Activated CD8-positive, alpha-beta memory T cell treated with anti-CD3 and anti-CD28 coated beads, Interleukin-2, amount 10 ng/mL, durations not matched to agents 7 days and 5 days (primary cell): ENCODE measurements at regions of chr12 and their contacts with region 1.

Region 1: DNA sequence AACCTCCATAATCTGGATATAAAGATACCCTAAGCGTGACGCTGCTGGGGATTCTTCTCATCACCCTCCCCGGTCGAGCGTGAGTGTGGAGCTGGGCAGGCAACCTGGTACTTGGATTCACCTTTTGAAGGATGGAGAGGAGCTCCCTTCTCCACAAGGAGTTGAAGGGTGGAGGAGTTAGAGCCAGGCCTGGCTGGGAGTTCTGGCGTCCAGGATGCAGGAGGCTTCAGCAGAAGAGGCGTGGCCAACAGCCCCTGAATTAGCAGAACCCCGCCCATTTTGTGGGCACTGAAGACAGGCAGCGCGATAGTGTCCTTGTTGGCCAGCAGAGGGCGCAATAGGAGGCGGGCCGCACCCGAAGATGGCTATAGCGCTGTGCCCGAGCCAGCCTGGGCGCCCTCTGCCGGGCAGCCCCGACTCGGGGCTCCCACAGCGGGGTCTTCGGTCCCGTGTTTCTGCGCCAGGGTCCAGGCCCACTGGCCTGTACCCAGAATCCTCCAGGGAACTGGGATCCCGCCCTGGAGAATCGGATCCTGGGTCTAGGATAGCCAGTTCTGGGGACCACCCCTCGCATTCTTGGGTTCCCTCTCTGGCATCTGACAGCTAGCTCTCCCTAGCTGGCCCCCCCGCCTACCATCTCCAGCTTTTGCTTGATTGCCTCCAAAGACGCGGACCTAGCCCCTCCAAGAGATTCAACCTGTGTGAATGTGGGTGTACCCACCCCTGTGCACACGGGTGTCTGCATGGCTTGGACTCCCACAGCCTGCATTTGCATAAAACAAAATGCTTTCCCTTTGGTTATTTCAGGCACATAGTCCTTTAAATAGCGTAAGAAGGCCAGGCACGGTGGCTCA is 26.0 kb upstream of the SMUG1 start:
- DNase-seq: peak; percentile 95
- ATAC-seq: peak; percentile 90
- H3K4me3 Mint-ChIP-seq: peak overlapping the region; percentile 61
- H3K27ac Mint-ChIP-seq: peak overlapping the region; percentile 18
- H3K4me1 Mint-ChIP-seq: peaks cover 36% of the 10 kb centered on the region
- H3K27me3 Mint-ChIP-seq: peaks cover 7% of the 10 kb centered on the region

Region 2: DNA sequence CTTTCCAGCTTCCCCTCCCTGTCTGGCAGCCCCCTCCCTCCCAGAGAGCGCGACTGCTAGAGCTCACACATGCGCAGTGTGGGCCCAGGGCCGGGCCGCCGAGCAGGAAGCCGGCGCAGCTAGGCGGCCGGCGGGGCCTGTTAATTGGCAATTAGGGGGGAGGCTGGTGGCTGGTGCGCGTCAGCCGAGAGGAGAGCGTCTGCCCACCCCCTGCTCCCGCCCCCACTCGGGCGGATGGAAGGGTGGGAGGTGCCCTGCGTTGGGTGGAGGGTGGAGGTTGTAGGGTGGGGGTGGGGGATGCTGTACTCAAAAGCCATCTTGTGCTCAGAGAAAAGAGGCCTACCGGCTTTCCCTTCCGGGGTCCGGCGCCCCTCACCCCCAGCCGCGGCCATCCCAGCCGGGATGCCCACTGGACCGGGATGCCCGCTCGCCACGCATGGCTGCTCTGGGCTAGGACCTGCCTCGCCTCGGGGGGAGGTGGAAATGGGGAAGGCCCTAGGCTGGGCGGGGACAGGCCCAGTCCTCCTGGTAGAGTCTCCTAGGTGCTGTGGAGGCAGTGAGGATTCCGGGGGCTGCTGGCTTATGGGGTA is 196.8 kb before region 1 on chr12:
- CTCF ChIA-PET with region 1: interaction called, 158 read pairs
- DNase-seq: peak; percentile 87
- ATAC-seq: peak; percentile 96
- H3K4me3 Mint-ChIP-seq: peak overlapping the region; percentile 74
- H3K27ac Mint-ChIP-seq: peak overlapping the region; percentile 58
- H3K4me1 Mint-ChIP-seq: peaks cover 15% of the 10 kb centered on the region
- H3K27me3 Mint-ChIP-seq: peaks cover 81% of the 10 kb centered on the region

Region 3: DNA sequence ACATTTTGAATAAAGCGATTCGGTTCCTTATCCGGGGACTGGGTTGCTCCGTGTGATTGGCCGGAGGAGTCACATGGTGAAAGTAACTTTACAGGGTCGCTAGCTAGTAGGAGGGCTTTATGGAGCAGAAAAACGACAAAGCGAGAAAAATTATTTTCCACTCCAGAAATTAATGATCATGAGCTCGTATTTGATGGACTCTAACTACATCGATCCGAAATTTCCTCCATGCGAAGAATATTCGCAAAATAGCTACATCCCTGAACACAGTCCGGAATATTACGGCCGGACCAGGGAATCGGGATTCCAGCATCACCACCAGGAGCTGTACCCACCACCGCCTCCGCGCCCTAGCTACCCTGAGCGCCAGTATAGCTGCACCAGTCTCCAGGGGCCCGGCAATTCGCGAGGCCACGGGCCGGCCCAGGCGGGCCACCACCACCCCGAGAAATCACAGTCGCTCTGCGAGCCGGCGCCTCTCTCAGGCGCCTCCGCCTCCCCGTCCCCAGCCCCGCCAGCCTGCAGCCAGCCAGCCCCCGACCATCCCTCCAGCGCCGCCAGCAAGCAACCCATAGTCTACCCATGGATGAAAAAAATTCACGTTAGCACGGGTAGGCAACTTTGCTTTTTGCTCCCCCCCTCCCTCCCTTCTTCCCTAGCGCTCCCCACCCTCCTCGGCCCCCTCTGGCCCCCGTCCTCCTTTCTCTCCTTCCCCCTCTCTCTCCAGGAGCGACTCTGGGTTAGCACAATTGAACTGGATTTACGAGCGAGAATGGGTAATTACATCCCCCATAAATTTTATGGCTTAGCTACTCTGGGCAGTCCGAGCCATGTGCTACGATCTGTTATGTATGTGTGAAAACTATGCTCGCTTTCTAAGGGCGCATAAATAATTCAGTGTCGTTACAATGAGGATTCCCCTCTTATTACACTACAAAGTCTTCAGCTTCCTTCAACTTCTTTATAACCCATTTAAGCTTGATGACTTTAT is 160.7 kb before region 1 on chr12 and contains the start of gene HOXC4:
- CTCF ChIA-PET with region 1: interaction called, 11 read pairs
- DNase-seq: peak; percentile 62
- ATAC-seq: peak; percentile 80
- H3K4me3 Mint-ChIP-seq: peak within 1 kb of the TSS; percentile 75
- H3K27ac Mint-ChIP-seq: peak within 1 kb of the TSS; percentile 79
- H3K4me1 Mint-ChIP-seq: peaks cover 30% of the 10 kb centered on the region
- H3K27me3 Mint-ChIP-seq: peaks cover 88% of the 10 kb centered on the region
- total RNA-seq, gene HOXC4: 1.5 to 1.9 TPM